ENCODE measurements at regions of chr3 and their contacts with region 1.

Region 1: DNA sequence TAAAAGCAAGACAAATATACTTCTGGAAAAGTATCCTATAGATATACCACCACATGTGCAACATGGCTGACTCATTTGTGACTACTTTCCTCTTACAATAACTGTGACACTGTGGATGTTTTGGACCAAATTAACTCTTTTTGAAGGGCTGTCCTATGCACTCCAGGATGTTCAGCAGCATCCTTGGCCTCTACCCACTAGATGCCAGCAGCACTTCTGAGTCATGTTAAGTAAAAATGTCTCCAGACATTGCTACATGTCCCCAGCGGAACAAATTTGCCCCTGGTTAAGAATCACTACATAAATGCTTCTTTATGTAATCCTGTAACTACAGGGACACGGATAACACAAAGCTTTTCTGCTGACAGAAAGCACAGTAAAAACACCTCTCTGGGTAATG is 32.0 kb downstream of the RUVBL1 start:
- DNase-seq: no peak
- ATAC-seq: no peak
- H3K4me3 ChIP-seq: no peak overlapping the region
- H3K27ac ChIP-seq: no peak overlapping the region
- H3K4me1 ChIP-seq: no peaks in the 10 kb centered on the region
- H3K27me3 ChIP-seq: no peaks in the 10 kb centered on the region
- CTCF ChIP-seq: no peak

Region 2: GRCh38 chr3:127899766-127900165 is 191.8 kb before region 1 on chr3:
- CTCF ChIA-PET with region 1: no interaction called
- POLR2A ChIA-PET with region 1: no interaction called
- in situ Hi-C with region 1: no loop called
- intact Hi-C with region 1: no loop called
- DNase-seq: no peak
- ATAC-seq: no peak
- H3K4me3 ChIP-seq: no peak overlapping the region
- H3K27ac ChIP-seq: no peak overlapping the region
- H3K4me1 ChIP-seq: no peaks in the 10 kb centered on the region
- H3K27me3 ChIP-seq: peaks cover 4% of the 10 kb centered on the region
- CTCF ChIP-seq: no peak

Region 3: GRCh38 chr3:128605091-128606046 is 513.8 kb after region 1 on chr3:
- CTCF ChIA-PET with region 1: interaction called, 11 read pairs
- POLR2A ChIA-PET with region 1: no interaction called
- in situ Hi-C with region 1: no loop called
- intact Hi-C with region 1: no loop called
- DNase-seq: no peak
- ATAC-seq: no peak
- H3K4me3 ChIP-seq: no peak overlapping the region
- H3K27ac ChIP-seq: no peak overlapping the region
- H3K4me1 ChIP-seq: 0 out of 2 replicates have a peak, but pooled peaks cover 3% of the 10 kb centered on the region
- H3K27me3 ChIP-seq: no peaks in the 10 kb centered on the region
- CTCF ChIP-seq: no peak

Measured in Panc1 (cell line).